Transverse colon (tissue), 4 donors: ENCODE measurements at regions of chr7 and their contacts with region 1.

Region 1: GRCh38 chr7:126426652-126427051 is 826.1 kb downstream of the GRM8 start:
- DNase-seq: no peak
- H3K4me3 ChIP-seq: no peak overlapping the region
- H3K27ac ChIP-seq: no peak overlapping the region
- H3K4me1 ChIP-seq: no peaks in the 10 kb centered on the region
- H3K27me3 ChIP-seq: no peaks in the 10 kb centered on the region
- CTCF ChIP-seq: no peak
- EP300 ChIP-seq: no peak
- POLR2A ChIP-seq: no peak

Region 2: DNA sequence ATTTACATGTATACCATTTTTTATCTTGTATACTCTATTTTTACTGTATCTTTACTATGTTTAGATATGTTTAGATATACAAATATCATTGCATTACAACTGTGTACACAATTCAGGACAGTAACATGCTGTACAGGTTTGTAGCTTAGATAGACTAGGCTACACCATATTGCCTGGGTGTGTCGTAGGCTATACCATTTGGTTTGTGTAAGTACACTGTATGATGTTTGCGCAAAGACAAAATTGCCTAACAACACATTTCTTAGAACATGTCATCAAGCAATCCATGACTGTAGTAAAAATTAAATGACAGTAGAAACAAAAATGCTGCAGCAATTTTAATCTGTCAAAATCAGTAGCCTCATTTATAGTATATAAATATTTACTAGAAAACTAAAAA is 13.9 kb after region 1 on chr7:
- in situ Hi-C with region 1: no loop called
- intact Hi-C with region 1: no loop called
- DNase-seq: peak; percentile 13
- H3K4me3 ChIP-seq: no peak overlapping the region
- H3K27ac ChIP-seq: no peak overlapping the region
- H3K4me1 ChIP-seq: peaks cover 0 to 13% (median 3%) of the 10 kb centered on the region in 4 donors
- H3K27me3 ChIP-seq: no peaks in the 10 kb centered on the region
- CTCF ChIP-seq: no peak
- EP300 ChIP-seq: peak; percentile 11
- POLR2A ChIP-seq: no peak

Region 3: DNA sequence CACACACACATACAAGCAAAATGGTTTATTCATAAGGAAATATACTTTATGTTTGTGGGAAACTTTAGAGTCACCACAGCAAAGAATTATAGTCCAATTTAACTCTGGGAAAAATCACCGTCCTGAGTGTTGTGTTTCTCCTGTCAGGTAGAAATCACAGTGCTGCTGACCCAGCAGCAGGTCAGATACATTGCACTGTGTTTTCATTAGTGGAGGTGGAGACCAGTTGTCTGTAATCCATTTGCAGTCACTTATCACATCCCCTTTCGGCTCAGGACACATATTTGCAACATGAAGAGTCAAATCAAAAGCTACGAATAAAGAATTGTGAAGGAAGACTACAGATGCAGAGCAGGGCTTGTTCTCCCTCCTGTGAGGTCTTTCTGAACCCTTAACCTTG is 26.5 kb after region 1 on chr7:
- in situ Hi-C with region 1: no loop called
- intact Hi-C with region 1: loop called (anchors 1 kb)
- DNase-seq: no peak
- H3K4me3 ChIP-seq: no peak overlapping the region
- H3K27ac ChIP-seq: no peak overlapping the region
- H3K4me1 ChIP-seq: peaks cover 0 to 26% (median 11%) of the 10 kb centered on the region in 4 donors
- H3K27me3 ChIP-seq: no peaks in the 10 kb centered on the region
- CTCF ChIP-seq: no peak
- EP300 ChIP-seq: no peak
- POLR2A ChIP-seq: no peak